ENCODE measurements at regions of chr18 and their contacts with region 1.

Region 1: GRCh38 chr18:34661464-34662111 is 48.5 kb upstream of the DTNA start:
- DNase-seq: no peak
- H3K4me3 ChIP-seq: peak overlapping the region in 1 of 4 experiments; percentile 44; a peak in 1 of 8 replicates
- H3K27ac ChIP-seq: peak overlapping the region; percentile 82
- H3K4me1 ChIP-seq: peaks cover 8 to 23% (median 18%) of the 10 kb centered on the region in 4 experiments; a peak in 6 of 7 replicates
- H3K27me3 ChIP-seq: no peaks in the 10 kb centered on the region
- CTCF ChIP-seq: peak in 2 of 3 experiments; percentile 61 to 83; a peak in 3 of 4 replicates
- EP300 ChIP-seq: no peak
- POLR2A ChIP-seq: no peak
- RAD21 ChIP-seq: peak; percentile 64 to 74

Region 2: DNA sequence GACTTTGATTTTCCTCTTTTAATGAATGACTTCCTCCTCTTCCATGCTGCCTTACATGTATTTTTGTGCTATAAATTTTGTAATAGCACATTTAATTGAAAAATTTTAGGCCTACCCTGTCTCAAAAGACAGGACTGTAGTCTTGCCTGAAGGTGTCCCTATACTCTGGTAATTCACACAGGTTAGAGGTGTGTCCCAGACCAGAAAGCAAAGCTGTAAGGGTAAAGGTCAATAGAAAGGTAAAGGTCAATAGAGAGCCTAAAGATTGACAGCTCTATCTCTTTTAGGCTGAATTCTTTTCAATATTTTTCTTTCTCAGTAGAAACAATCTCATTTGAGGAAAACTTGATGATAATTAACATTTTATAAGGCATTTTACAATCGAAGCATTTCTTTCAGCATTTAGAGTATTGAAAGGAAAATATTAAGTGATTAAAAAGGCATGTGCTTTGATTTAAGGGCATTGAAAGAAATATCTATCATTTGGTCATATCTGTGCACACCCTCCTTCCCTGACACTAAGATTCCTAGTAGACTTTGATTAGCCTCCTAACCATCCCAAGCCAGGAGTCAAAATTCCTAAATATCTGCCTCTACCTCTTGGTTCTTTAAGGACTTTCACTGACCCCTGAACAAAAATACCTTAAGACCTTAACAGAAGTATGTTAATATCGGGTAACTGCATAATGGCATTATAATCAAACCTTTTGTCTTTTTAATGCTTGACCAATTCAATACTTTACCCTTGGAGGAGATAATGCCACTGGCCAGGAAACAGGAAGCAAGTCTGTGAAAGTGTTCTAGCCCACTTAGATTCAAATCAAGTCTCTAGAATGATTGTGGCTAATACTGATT is 113.2 kb before region 1 on chr18:
- CTCF ChIA-PET with region 1: interaction called, 16 read pairs
- POLR2A ChIA-PET with region 1: no interaction called
- DNase-seq: peak in 1 of 2 experiments; percentile 5
- H3K4me3 ChIP-seq: peak overlapping the region in 1 of 4 experiments; percentile 19; a peak in 2 of 8 replicates
- H3K27ac ChIP-seq: no peak overlapping the region
- H3K4me1 ChIP-seq: peaks cover 2 to 30% (median 16%) of the 10 kb centered on the region in 4 experiments; a peak in 4 of 7 replicates
- H3K27me3 ChIP-seq: no peaks in the 10 kb centered on the region
- CTCF ChIP-seq: peak in 1 of 3 experiments; percentile 13; a peak in 1 of 4 replicates
- EP300 ChIP-seq: no peak
- POLR2A ChIP-seq: no peak
- RAD21 ChIP-seq: peak; percentile 28 to 33; a peak in 3 of 4 replicates

Region 3: GRCh38 chr18:34567857-34568256 is 93.7 kb before region 1 on chr18:
- CTCF ChIA-PET with region 1: no interaction called
- POLR2A ChIA-PET with region 1: no interaction called
- DNase-seq: no peak
- H3K4me3 ChIP-seq: no peak overlapping the region
- H3K27ac ChIP-seq: no peak overlapping the region
- H3K4me1 ChIP-seq: no peaks in the 10 kb centered on the region
- H3K27me3 ChIP-seq: 0 out of 7 replicates have a peak, but pooled peaks cover 0 to 1% (median 0%) of the 10 kb centered on the region in 4 experiments
- CTCF ChIP-seq: no peak
- EP300 ChIP-seq: no peak
- POLR2A ChIP-seq: no peak
- RAD21 ChIP-seq: no peak

Region 4: GRCh38 chr18:34647251-34647650 is 14.3 kb before region 1 on chr18:
- CTCF ChIA-PET with region 1: interaction called, 29 read pairs
- POLR2A ChIA-PET with region 1: interaction called, 19 read pairs
- DNase-seq: no peak
- H3K4me3 ChIP-seq: no peak overlapping the region
- H3K27ac ChIP-seq: no peak overlapping the region
- H3K4me1 ChIP-seq: peaks cover 0 to 10% (median 3%) of the 10 kb centered on the region in 4 experiments; a peak in 3 of 7 replicates
- H3K27me3 ChIP-seq: no peaks in the 10 kb centered on the region
- CTCF ChIP-seq: peak in 2 of 3 experiments; percentile 36 to 53; a peak in 2 of 4 replicates
- EP300 ChIP-seq: no peak
- POLR2A ChIP-seq: no peak
- RAD21 ChIP-seq: peak; percentile 14 to 32; a peak in 2 of 4 replicates

Region 5: GRCh38 chr18:34695310-34695709 is 33.7 kb after region 1 on chr18:
- CTCF ChIA-PET with region 1: interaction called, 31 read pairs
- POLR2A ChIA-PET with region 1: interaction called, 4 read pairs
- DNase-seq: no peak
- H3K4me3 ChIP-seq: no peak overlapping the region
- H3K27ac ChIP-seq: 0 out of 2 replicates have a peak overlapping the region, but pooled peaks have one; percentile 22
- H3K4me1 ChIP-seq: peaks cover 0 to 9% (median 2%) of the 10 kb centered on the region in 4 experiments; a peak in 3 of 7 replicates
- H3K27me3 ChIP-seq: no peaks in the 10 kb centered on the region
- CTCF ChIP-seq: no peak
- EP300 ChIP-seq: no peak
- POLR2A ChIP-seq: no peak
- RAD21 ChIP-seq: no peak

Region 6: GRCh38 chr18:34787931-34788532 is 126.4 kb after region 1 on chr18:
- CTCF ChIA-PET with region 1: interaction called, 75 read pairs
- POLR2A ChIA-PET with region 1: interaction called, 5 read pairs
- DNase-seq: no peak
- H3K4me3 ChIP-seq: no peak overlapping the region
- H3K27ac ChIP-seq: no peak overlapping the region
- H3K4me1 ChIP-seq: no peaks in the 10 kb centered on the region; a peak in 1 of 7 replicates
- H3K27me3 ChIP-seq: peaks cover 0 to 1% (median 0%) of the 10 kb centered on the region in 4 experiments; a peak in 1 of 7 replicates
- CTCF ChIP-seq: peak in 2 of 3 experiments; percentile 67; a peak in 3 of 4 replicates
- EP300 ChIP-seq: no peak
- POLR2A ChIP-seq: no peak
- RAD21 ChIP-seq: peak; percentile 86 to 88

Measured in H1 (cell line).